ENCODE measurements at regions of chr1 and their contacts with region 1.

Region 1: GRCh38 chr1:32981003-32981901 is 16.6 kb upstream of the RNF19B start:
- DNase-seq: peak; percentile 46
- ATAC-seq: peak; percentile 93
- H3K4me3 Mint-ChIP-seq: peak overlapping the region; percentile 68
- H3K27ac Mint-ChIP-seq: peak overlapping the region; percentile 89
- H3K4me1 Mint-ChIP-seq: peaks cover 55% of the 10 kb centered on the region
- H3K27me3 Mint-ChIP-seq: no peaks in the 10 kb centered on the region
- CTCF ChIP-seq: no peak

Region 2: GRCh38 chr1:31296486-31297276 is 1684.6 kb before region 1 on chr1 and contains the starts of genes SNRNP40 and ZCCHC17:
- CTCF ChIA-PET with region 1: no interaction called
- POLR2A ChIA-PET with region 1: no interaction called
- intact Hi-C with region 1: loop called (anchors 5 kb)
- DNase-seq: peak; percentile 79
- ATAC-seq: peak; percentile 96
- H3K4me3 Mint-ChIP-seq: no peak within 1 kb of the TSS
- H3K27ac Mint-ChIP-seq: no peak within 1 kb of the TSS
- H3K4me1 Mint-ChIP-seq: peaks cover 13% of the 10 kb centered on the region
- H3K27me3 Mint-ChIP-seq: no peaks in the 10 kb centered on the region
- CTCF ChIP-seq: no peak
- total RNA-seq, gene SNRNP40: 83.2 and 85.1 TPM in 2 replicates
- total RNA-seq, gene ZCCHC17: 19.5 and 19.9 TPM in 2 replicates

Region 3: GRCh38 chr1:32958827-32959226 is 22.4 kb before region 1 on chr1:
- CTCF ChIA-PET with region 1: interaction called, 3 read pairs
- POLR2A ChIA-PET with region 1: interaction called, 81 read pairs
- intact Hi-C with region 1: loop called (anchors 1 kb)
- DNase-seq: no peak
- ATAC-seq: no peak
- H3K4me3 Mint-ChIP-seq: peak overlapping the region; percentile 4
- H3K27ac Mint-ChIP-seq: peak overlapping the region; percentile 20
- H3K4me1 Mint-ChIP-seq: peaks cover 83% of the 10 kb centered on the region
- H3K27me3 Mint-ChIP-seq: no peaks in the 10 kb centered on the region
- CTCF ChIP-seq: no peak

Region 4: DNA sequence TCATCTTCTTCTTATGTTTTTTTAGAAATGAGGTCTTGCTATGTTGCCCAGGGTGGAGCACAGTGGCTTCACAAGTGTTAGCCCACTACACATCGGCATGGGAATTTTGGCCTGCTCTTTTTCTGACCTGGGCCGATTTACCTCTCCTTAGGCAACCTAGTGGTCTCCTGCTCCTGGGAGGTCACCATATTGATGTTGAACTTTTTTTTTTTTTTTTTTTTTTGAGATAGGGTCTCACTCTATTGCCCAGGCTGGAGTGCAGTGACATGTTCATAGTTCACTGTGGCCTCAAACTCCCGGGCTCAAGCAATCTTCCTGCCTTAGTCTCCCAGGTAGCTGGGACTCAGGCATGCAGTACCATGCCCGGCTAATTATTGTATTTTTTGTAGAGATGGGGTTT is 48.0 kb after region 1 on chr1:
- CTCF ChIA-PET with region 1: no interaction called
- POLR2A ChIA-PET with region 1: no interaction called
- intact Hi-C with region 1: no loop called
- DNase-seq: no peak
- ATAC-seq: no peak
- H3K4me3 Mint-ChIP-seq: no peak overlapping the region
- H3K27ac Mint-ChIP-seq: no peak overlapping the region
- H3K4me1 Mint-ChIP-seq: peaks cover 57% of the 10 kb centered on the region
- H3K27me3 Mint-ChIP-seq: no peaks in the 10 kb centered on the region
- CTCF ChIP-seq: no peak

Region 5: DNA sequence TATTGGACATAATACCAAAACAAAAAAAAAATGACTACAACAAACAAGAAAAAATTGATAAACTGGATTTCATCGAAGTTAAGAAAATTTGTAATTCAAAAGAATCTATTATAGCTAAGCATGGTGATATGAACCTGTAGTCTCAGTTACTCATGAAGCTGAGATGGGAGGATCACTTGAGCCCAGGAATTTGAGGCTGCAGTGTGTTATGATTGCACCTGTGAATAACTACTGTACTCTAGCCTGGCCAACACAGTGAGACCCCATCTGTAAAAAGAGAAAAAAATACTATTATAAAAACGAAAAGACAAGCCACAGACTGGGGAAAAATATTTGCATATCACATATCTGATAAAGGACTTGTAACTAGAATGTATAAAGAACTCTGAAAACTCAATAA is 225.1 kb after region 1 on chr1:
- CTCF ChIA-PET with region 1: no interaction called
- POLR2A ChIA-PET with region 1: no interaction called
- intact Hi-C with region 1: no loop called
- DNase-seq: no peak
- ATAC-seq: no peak
- H3K4me3 Mint-ChIP-seq: no peak overlapping the region
- H3K27ac Mint-ChIP-seq: no peak overlapping the region
- H3K4me1 Mint-ChIP-seq: no peaks in the 10 kb centered on the region
- H3K27me3 Mint-ChIP-seq: peaks cover 31% of the 10 kb centered on the region
- CTCF ChIP-seq: no peak

Measured in activated B cell treated with CpG ODN at 0.5 μM for 24 hours (primary cell).